Activated CD4-positive, alpha-beta memory T cell treated with anti-CD3 and anti-CD28 coated beads for 36 hours (primary cell): ENCODE measurements at regions of chr12 and their contacts with region 1.

Region 1: GRCh38 chr12:49088190-49088931 is 6.2 kb downstream of the DHH start:
- DNase-seq: peak; percentile 78
- H3K4me3 Mint-ChIP-seq: peak overlapping the region; percentile 16
- H3K27ac Mint-ChIP-seq: peak overlapping the region; percentile 23
- H3K4me1 Mint-ChIP-seq: peaks cover 43% of the 10 kb centered on the region
- H3K27me3 Mint-ChIP-seq: peaks cover 46% of the 10 kb centered on the region

Region 2: DNA sequence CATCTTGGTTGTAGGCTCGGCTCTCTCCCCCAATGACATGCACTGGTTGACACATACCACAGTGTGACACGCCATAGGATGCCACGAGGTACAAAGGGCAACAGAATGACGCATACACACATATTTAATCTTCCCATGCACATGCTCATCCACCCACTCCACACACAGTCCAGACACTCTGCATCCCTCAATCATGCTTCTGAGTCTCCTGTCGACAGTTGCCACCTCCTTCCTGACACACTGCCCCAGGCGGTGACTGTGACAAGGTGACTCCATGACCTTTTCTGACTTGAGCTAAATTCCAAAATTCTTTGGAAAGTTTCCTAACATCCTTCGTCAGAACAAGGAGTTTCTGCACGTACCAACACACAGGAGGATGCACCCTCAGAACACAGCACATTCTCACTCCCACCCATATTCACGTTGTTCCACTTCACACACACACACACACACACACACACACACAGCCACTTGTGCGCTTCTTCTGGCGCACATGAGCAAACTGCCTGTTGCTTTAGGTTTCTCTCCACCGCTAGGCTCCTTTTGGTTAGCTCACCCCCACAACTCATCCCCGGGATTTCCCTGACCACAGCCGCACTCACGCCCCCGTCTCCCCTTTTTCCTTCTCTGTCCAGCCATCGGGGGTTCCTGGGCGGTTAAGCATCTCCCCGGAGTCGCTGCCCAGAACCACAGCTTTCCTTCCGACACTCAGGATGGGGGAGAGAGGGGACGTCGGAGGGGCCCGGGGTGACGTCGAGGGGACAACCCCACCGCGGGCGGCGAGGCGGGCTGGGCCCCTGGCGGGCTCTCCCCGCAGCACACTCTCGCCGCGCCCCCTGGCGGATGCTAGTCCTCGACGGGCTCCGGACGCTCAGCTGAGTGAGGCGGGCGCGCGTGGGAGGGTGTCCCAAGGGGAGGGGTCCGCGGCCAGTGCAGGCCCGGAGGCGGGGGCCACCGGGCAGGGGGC is 110.8 kb before region 1 on chr12:
- CTCF ChIA-PET with region 1: interaction called, 6 read pairs
- POLR2A ChIA-PET with region 1: interaction called, 4 read pairs
- intact Hi-C with region 1: loop called (anchors 5 kb)
- DNase-seq: peak; percentile 87
- H3K4me3 Mint-ChIP-seq: peak overlapping the region; percentile 59
- H3K27ac Mint-ChIP-seq: peak overlapping the region; percentile 70
- H3K4me1 Mint-ChIP-seq: peaks cover 55% of the 10 kb centered on the region
- H3K27me3 Mint-ChIP-seq: peaks cover 63% of the 10 kb centered on the region

Region 3: DNA sequence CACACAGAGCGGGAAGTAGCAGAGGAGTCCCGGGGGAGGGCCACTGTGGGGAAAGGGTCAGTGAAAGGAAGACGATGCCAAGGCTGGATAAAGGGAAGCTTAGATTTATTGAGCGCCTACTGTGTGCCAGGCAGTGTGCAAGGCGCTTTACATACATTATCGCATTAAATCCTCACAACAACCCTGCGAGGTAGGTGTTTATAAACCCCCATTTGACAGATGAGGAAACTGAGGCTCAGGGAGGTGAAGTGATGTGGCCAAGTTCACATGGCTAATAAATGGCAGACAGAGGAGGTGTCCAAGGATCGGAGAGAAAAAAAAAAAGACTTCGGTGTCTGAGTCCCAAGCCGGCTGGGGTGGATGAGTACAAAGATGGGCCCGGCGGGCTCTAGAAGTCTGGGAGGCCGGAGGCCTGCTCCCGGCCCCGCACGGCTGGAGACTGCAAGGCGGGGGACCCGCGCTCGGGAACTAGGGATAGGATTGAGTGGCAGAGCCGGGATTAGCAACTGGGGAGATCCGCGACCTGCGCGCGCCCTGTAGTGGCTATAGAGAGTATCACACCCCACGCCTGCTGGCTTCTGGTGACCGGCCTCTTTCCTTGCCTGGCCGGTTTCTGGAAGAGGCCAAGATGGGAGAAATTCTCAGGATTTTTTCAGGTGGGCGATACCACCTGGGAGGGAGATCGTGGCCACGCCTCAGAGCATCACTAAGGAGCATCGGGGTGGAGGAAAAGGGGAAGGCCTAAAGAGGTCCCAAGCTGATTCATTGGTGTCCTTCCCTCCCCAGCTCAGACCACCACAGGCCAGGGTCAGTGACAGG is 93.1 kb before region 1 on chr12:
- CTCF ChIA-PET with region 1: interaction called, 18 read pairs
- POLR2A ChIA-PET with region 1: no interaction called
- intact Hi-C with region 1: loop called (anchors 2 kb)
- DNase-seq: peak; percentile 72
- H3K4me3 Mint-ChIP-seq: no peak overlapping the region
- H3K27ac Mint-ChIP-seq: no peak overlapping the region
- H3K4me1 Mint-ChIP-seq: peaks cover 32% of the 10 kb centered on the region
- H3K27me3 Mint-ChIP-seq: peaks cover 37% of the 10 kb centered on the region

Region 4: GRCh38 chr12:49043856-49044258 is 44.5 kb before region 1 on chr12:
- CTCF ChIA-PET with region 1: interaction called, 10 read pairs
- POLR2A ChIA-PET with region 1: no interaction called
- intact Hi-C with region 1: no loop called
- DNase-seq: peak; percentile 84
- H3K4me3 Mint-ChIP-seq: no peak overlapping the region
- H3K27ac Mint-ChIP-seq: peak overlapping the region; percentile 51
- H3K4me1 Mint-ChIP-seq: peaks cover 2% of the 10 kb centered on the region
- H3K27me3 Mint-ChIP-seq: no peaks in the 10 kb centered on the region

Region 5: GRCh38 chr12:49069507-49070346 is 18.6 kb before region 1 on chr12 and contains the start of gene RHEBL1:
- CTCF ChIA-PET with region 1: interaction called, 256 read pairs
- POLR2A ChIA-PET with region 1: interaction called, 11 read pairs
- intact Hi-C with region 1: loop called (anchors 1 kb)
- DNase-seq: peak; percentile 100
- H3K4me3 Mint-ChIP-seq: peak within 1 kb of the TSS; percentile 98
- H3K27ac Mint-ChIP-seq: peak within 1 kb of the TSS; percentile 90
- H3K4me1 Mint-ChIP-seq: peaks cover 12% of the 10 kb centered on the region
- H3K27me3 Mint-ChIP-seq: no peaks in the 10 kb centered on the region
- total RNA-seq, gene RHEBL1: 15.6 to 16.1 TPM

Region 6: DNA sequence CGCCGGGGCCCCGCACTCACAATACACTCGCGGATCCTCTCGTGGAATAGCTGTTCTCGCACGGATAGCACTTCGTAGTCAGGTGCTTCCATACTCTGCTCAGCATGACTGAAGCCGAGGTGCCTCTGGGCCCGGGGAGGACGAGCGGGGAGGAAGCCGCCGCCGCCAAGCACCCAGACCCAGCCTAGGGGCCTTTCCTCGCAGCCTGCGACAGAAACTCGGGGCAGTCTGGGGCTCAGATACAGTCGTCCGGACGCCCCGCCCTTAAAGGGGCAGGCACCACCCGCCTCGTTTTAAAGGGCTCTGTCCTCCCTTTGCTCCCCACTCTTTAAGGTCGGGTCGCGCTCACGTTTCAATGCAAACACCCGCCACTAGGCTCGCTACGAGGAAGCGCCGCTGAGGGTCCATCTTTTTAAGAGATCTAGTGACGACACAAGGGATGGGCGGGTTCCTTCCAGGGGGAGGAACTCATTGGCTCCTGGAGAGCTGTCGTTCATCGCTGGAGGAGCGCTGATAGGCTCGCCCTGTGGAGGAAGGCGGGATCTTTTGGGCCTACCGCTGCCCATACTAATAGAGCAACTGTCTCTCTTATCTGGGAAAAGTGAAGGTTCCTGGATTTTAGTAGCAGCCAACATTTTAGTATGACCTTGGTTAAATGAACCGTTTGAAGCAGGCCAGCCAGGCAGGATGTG is 22.2 kb after region 1 on chr12 and contains the start of gene LMBR1L:
- CTCF ChIA-PET with region 1: interaction called, 184 read pairs
- POLR2A ChIA-PET with region 1: interaction called, 3 read pairs
- intact Hi-C with region 1: loop called (anchors 1 kb)
- DNase-seq: peak; percentile 97
- H3K4me3 Mint-ChIP-seq: peak within 1 kb of the TSS; percentile 95
- H3K27ac Mint-ChIP-seq: peak within 1 kb of the TSS; percentile 80
- H3K4me1 Mint-ChIP-seq: peaks cover 24% of the 10 kb centered on the region
- H3K27me3 Mint-ChIP-seq: no peaks in the 10 kb centered on the region
- total RNA-seq, gene LMBR1L: 55.0 to 59.1 TPM

Region 7: GRCh38 chr12:49130151-49131050 is 42.0 kb after region 1 on chr12:
- CTCF ChIA-PET with region 1: interaction called, 36 read pairs
- POLR2A ChIA-PET with region 1: interaction called, 11 read pairs
- intact Hi-C with region 1: loop called (anchors 2 kb)
- DNase-seq: peak; percentile 96
- H3K4me3 Mint-ChIP-seq: peak overlapping the region; percentile 97
- H3K27ac Mint-ChIP-seq: peak overlapping the region; percentile 99
- H3K4me1 Mint-ChIP-seq: peaks cover 46% of the 10 kb centered on the region
- H3K27me3 Mint-ChIP-seq: peaks cover 7% of the 10 kb centered on the region

Region 8: DNA sequence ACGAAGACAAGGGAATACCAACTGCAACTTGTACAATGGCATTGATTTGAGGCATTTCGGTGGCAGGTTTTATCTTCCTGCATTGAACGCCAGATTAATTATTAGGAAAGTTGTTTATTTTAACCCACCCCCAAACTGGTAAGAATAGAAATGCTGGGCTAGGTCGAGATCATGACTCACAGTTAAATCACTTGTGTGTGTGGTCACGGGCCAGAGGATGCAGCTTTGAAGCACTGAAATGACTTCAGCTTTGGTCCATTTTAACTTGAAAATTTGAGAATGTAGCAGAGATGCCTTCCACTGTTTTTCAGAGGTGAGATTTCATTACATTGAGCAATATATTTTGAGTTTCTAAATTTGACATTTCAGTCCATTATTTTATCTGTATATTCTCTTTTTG is 426.9 kb after region 1 on chr12:
- CTCF ChIA-PET with region 1: no interaction called
- POLR2A ChIA-PET with region 1: no interaction called
- intact Hi-C with region 1: no loop called
- DNase-seq: no peak
- H3K4me3 Mint-ChIP-seq: no peak overlapping the region
- H3K27ac Mint-ChIP-seq: no peak overlapping the region
- H3K4me1 Mint-ChIP-seq: peaks cover 6% of the 10 kb centered on the region
- H3K27me3 Mint-ChIP-seq: no peaks in the 10 kb centered on the region

Region 9: DNA sequence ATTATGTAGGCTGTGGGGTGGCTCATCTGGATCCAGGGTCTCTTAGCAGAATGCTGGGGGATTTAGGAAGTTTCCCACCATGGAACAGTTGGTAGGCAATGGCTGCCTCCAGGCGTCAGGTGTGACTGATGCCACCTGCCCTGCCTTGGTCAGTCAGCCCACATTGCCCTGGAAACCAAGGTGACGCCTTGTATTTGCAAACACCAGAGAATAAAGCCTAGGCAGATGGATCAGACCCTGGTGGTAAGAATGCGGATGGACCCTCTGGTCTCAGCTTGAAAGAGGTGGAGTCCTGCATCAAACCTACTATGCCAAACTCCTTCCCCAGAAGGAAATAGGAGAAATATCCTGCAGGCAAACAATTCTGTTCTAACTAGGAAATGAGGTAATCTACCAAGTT is 701.6 kb after region 1 on chr12:
- CTCF ChIA-PET with region 1: no interaction called
- POLR2A ChIA-PET with region 1: no interaction called
- intact Hi-C with region 1: no loop called
- DNase-seq: no peak
- H3K4me3 Mint-ChIP-seq: no peak overlapping the region
- H3K27ac Mint-ChIP-seq: no peak overlapping the region
- H3K4me1 Mint-ChIP-seq: no peaks in the 10 kb centered on the region
- H3K27me3 Mint-ChIP-seq: no peaks in the 10 kb centered on the region